HepG2 (cell line): ENCODE measurements at regions of chr9 and their contacts with region 1.

Region 1: DNA sequence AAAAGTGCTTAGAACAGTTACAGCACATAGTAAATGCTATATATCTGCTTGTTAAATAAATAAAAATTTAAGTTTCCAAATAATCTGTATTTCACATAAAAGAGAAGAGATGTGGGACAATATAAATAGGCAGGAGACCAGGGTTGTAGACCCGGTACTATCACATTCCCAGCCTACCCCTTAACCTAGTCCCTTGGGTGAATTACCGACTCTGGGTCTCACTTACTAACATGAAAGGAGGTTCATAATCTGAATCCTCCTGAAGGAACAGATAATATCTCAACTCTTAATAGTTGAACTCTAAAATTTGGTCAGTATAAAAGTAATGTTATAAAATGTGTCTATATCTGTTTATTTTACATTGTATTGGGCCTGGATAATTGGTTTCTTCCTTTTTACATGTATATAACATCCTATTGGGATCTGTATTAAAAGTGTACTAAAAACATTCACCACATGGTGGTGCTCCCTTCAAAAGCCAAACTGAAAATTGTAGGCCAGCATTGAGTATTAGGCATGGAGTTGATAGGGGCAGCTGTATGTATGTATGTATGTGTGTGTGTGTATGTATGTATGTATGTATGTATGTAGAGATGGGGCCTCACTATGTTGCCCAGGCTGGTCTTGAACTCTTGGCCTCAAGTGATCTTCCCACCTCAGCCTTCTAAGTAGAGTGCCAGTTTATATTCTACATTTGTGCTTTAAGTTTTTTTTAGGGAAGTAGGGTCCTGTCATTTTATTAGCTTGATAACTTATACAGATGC is 64.2 kb upstream of the ABL1 start:
- DNase-seq: peak; percentile 50
- ATAC-seq: peak; percentile 65
- H3K4me3 ChIP-seq: no peak overlapping the region
- H3K27ac ChIP-seq: no peak overlapping the region
- H3K4me1 ChIP-seq: peaks cover 32% of the 10 kb centered on the region
- H3K27me3 ChIP-seq: no peaks in the 10 kb centered on the region
- CTCF ChIP-seq: peak; percentile 69
- EP300 ChIP-seq: no peak
- POLR2A ChIP-seq: no peak
- RAD21 ChIP-seq: no peak; the same call in 1 of the 2 replicates

Region 2: DNA sequence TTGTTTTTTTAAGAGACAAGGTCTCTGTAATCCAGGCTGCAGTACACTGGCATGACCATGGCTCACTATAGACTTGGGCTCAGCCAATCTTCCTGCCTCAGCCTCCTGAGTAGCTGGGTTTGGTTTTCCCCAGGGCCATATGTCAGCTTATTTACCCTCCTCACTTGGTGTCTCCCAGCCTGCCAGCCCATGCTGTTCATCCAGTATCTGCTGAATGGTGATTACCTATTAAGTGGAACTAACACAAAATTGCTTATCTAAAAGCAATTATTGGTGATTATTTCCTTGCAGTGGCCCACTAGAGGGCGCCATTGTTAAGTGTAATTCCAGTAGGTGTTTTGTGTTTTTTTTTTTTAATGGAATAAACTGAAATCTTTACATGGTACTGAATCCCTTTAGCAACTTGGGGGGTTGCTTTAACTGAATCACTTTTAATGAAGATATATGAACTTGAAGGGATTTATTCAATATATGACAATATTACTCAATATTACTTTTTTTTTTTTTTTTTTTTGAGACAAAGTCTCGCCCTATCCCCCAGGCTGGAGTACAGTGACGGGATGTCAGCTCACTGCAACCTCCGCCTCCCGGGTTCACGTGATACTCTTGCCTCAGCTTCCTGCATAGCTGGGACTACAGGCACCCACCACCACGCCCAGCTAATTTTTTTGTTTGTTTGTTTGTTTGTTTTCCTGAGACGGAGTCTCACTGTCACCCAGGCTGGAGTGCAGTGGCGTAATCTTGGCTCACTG is 63.5 kb before region 1 on chr9:
- CTCF ChIA-PET with region 1: no interaction called
- POLR2A ChIA-PET with region 1: no interaction called
- in situ Hi-C with region 1: no loop called
- intact Hi-C with region 1: loop called (anchors 1 kb)
- DNase-seq: peak; percentile 63
- ATAC-seq: peak; percentile 65
- H3K4me3 ChIP-seq: no peak overlapping the region
- H3K27ac ChIP-seq: no peak overlapping the region
- H3K4me1 ChIP-seq: no peaks in the 10 kb centered on the region; the same call in 1 of the 2 replicates
- H3K27me3 ChIP-seq: no peaks in the 10 kb centered on the region
- CTCF ChIP-seq: peak; percentile 67
- EP300 ChIP-seq: no peak
- POLR2A ChIP-seq: no peak
- RAD21 ChIP-seq: 0 out of 2 replicates have a peak, but pooled peaks have one; percentile 31

Region 3: GRCh38 chr9:130805510-130806326 is 34.9 kb after region 1 on chr9:
- CTCF ChIA-PET with region 1: no interaction called
- POLR2A ChIA-PET with region 1: no interaction called
- in situ Hi-C with region 1: no loop called
- intact Hi-C with region 1: no loop called
- DNase-seq: no peak
- ATAC-seq: no peak
- H3K4me3 ChIP-seq: no peak overlapping the region
- H3K27ac ChIP-seq: no peak overlapping the region
- H3K4me1 ChIP-seq: no peaks in the 10 kb centered on the region
- H3K27me3 ChIP-seq: no peaks in the 10 kb centered on the region
- CTCF ChIP-seq: no peak
- EP300 ChIP-seq: no peak
- POLR2A ChIP-seq: no peak
- RAD21 ChIP-seq: no peak

Region 4: GRCh38 chr9:130817914-130818313 is 47.1 kb after region 1 on chr9:
- CTCF ChIA-PET with region 1: no interaction called
- POLR2A ChIA-PET with region 1: no interaction called
- in situ Hi-C with region 1: no loop called
- intact Hi-C with region 1: no loop called
- DNase-seq: no peak
- ATAC-seq: no peak
- H3K4me3 ChIP-seq: no peak overlapping the region
- H3K27ac ChIP-seq: no peak overlapping the region
- H3K4me1 ChIP-seq: no peaks in the 10 kb centered on the region
- H3K27me3 ChIP-seq: no peaks in the 10 kb centered on the region
- CTCF ChIP-seq: no peak
- EP300 ChIP-seq: no peak
- POLR2A ChIP-seq: no peak
- RAD21 ChIP-seq: no peak

Region 5: DNA sequence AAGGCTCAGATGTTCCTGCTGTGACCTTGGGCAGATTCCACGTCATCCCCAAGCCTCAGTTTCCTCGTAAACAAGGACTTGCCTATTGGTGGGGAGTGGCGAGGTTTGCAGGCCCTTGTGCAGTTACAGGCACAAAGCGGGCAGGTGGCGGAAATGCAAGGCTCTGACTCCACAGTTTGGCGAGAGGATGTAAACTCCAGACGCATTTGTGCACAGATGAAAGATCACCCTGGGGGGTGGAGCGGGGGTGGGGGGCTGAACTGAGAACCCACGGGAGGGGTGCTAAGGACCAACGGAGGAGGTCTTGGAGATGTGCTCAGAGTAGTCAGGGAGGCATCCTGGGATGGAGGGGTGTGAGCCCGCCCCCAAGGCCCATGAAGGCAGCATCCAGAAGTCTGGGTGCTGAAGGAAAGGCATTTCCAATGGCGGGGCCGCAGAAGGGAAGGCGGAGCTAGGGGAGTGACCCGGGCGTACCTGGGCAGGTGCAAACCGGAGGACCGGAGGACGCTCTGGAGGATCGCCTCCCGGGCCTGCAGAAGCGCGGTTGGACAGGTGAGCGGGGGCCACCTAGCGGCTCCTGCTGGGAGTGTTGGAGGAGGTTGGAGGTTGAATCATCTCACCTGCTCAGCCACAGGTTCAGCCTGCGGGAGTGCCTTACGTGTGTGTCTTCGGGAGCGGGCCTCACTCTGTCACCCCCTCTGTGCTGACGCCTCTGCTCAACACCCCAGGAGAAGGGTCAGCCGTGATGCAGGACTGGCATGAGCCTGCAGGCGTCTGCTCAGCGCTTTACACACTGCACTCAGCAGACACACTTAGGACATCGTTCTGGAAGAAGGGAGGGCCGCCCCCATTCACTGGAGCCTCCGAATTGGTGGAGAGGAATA is 170.1 kb after region 1 on chr9:
- CTCF ChIA-PET with region 1: no interaction called
- POLR2A ChIA-PET with region 1: no interaction called
- in situ Hi-C with region 1: loop called (anchors 10 kb)
- intact Hi-C with region 1: no loop called
- DNase-seq: peak; percentile 47
- ATAC-seq: peak; percentile 75
- H3K4me3 ChIP-seq: no peak overlapping the region
- H3K27ac ChIP-seq: no peak overlapping the region
- H3K4me1 ChIP-seq: peaks cover 24% of the 10 kb centered on the region
- H3K27me3 ChIP-seq: peaks cover 11 to 87% of the 10 kb centered on the region in 2 experiments
- CTCF ChIP-seq: peak; percentile 94
- EP300 ChIP-seq: no peak
- POLR2A ChIP-seq: no peak
- RAD21 ChIP-seq: peak; percentile 87